CD4-positive, alpha-beta T cell (primary cell): ENCODE measurements at regions of chr1 and their contacts with region 1.

Region 1: GRCh38 chr1:155208541-155209311 is at the start of gene MTX1:
- DNase-seq: peak; percentile 73 to 95 (median 86)
- ATAC-seq: peak; percentile 80
- H3K4me3 ChIP-seq: peak within 1 kb of the TSS; percentile 69
- H3K4me3 Mint-ChIP-seq: peak within 1 kb of the TSS; percentile 94
- H3K27ac ChIP-seq: peak within 1 kb of the TSS; percentile 99 to 100
- H3K27ac Mint-ChIP-seq: peak within 1 kb of the TSS; percentile 96
- H3K4me1 ChIP-seq: peaks cover 30% of the 10 kb centered on the region
- H3K4me1 Mint-ChIP-seq: peaks cover 31% of the 10 kb centered on the region
- H3K27me3 ChIP-seq: no peaks in the 10 kb centered on the region
- H3K27me3 Mint-ChIP-seq: no peaks in the 10 kb centered on the region
- CTCF ChIP-seq: no peak
- total RNA-seq, gene MTX1: 19.9 to 20.7 TPM

Region 2: DNA sequence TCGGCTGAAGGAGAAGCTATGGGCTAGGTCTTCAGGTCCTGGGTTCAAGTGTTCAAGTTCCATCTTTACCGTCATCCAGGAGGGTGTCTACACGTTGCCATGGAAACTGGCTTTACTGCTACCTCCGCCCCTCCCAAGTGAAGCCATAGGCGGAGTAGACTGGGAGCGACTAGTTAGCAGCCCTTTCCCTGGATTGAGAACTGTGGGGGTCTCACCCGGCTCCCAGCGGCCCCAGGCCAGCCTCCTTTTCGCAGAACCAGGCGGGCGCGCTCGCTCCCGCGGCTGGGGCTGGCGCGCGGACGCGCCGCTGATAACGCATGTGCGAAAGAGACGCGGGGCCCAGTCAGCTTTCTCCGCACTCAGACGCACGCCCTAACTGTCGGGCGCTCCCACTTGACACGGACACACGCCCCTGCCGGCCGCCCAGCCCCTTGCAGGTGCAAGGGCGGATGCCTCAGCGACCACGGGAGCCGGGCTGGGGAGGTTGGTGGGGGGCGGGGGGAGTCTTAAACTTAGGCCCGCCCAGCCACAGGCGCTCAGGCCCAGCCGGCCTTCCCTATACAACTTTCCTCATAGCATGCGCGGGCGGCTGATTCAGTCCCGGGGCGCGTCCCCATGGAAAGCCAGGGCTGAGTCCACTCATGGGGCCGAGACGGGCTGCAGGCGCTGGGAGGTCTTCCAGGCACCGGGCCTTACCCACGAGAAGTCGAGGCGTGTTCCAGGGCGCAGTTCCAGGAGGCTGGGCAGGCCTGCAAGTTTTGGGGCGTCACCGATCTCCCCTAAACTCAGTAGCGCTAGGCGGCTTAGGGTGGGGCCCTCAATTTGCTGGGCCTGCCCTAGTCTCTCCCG is 137.8 kb before region 1 on chr1:
- CTCF ChIA-PET with region 1: no interaction called
- POLR2A ChIA-PET with region 1: no interaction called
- intact Hi-C with region 1: no loop called
- DNase-seq: peak; percentile 63 to 92 (median 78)
- ATAC-seq: peak; percentile 99
- H3K4me3 ChIP-seq: peak overlapping the region; percentile 49
- H3K4me3 Mint-ChIP-seq: peak overlapping the region; percentile 44
- H3K27ac ChIP-seq: no peak overlapping the region
- H3K27ac Mint-ChIP-seq: no peak overlapping the region
- H3K4me1 ChIP-seq: peaks cover 29% of the 10 kb centered on the region
- H3K4me1 Mint-ChIP-seq: peaks cover 30% of the 10 kb centered on the region
- H3K27me3 ChIP-seq: no peaks in the 10 kb centered on the region
- H3K27me3 Mint-ChIP-seq: no peaks in the 10 kb centered on the region
- CTCF ChIP-seq: peak; percentile 42

Region 3: DNA sequence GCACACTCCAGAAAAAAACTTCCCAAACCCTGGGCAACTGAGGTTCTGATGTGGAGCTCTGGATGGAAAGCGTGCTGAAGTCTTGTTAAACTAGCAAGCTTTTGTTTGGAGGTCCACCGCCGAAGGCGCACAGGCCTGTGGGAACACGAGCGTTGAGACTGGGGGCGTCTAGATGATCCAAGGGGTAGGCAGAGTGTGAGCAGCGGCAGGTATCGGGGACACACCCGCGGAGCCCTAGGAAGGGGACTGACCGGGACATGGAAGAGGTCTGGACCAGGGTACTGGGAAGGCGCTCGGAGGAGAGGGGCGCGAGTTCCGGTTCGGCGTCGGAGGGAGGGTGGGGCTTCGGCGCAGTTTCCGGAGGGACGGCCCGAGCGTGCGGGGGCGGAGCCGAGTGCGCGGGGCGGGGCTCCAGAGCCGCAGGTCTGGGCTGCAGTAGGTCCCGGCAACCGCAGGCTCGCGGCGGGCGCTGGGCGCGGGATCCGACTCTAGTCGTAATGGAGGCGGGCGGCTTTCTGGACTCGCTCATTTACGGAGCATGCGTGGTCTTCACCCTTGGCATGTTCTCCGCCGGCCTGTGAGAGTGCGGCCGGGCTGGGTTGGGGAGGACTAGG is 73.2 kb before region 1 on chr1 and contains the start of gene SLC50A1:
- CTCF ChIA-PET with region 1: interaction called, 3 read pairs
- POLR2A ChIA-PET with region 1: no interaction called
- intact Hi-C with region 1: loop called in 1 of 2 experiments (anchors 5 kb)
- DNase-seq: peak; percentile 83 to 97 (median 89)
- ATAC-seq: peak; percentile 85
- H3K4me3 ChIP-seq: peak within 1 kb of the TSS; percentile 97
- H3K4me3 Mint-ChIP-seq: peak within 1 kb of the TSS; percentile 95
- H3K27ac ChIP-seq: peak within 1 kb of the TSS; percentile 98 to 99
- H3K27ac Mint-ChIP-seq: peak within 1 kb of the TSS; percentile 98
- H3K4me1 ChIP-seq: peaks cover 47% of the 10 kb centered on the region
- H3K4me1 Mint-ChIP-seq: peaks cover 54% of the 10 kb centered on the region
- H3K27me3 ChIP-seq: no peaks in the 10 kb centered on the region
- H3K27me3 Mint-ChIP-seq: peaks cover 3% of the 10 kb centered on the region
- CTCF ChIP-seq: no peak
- total RNA-seq, gene SLC50A1: 10.2 to 12.5 TPM

Region 4: DNA sequence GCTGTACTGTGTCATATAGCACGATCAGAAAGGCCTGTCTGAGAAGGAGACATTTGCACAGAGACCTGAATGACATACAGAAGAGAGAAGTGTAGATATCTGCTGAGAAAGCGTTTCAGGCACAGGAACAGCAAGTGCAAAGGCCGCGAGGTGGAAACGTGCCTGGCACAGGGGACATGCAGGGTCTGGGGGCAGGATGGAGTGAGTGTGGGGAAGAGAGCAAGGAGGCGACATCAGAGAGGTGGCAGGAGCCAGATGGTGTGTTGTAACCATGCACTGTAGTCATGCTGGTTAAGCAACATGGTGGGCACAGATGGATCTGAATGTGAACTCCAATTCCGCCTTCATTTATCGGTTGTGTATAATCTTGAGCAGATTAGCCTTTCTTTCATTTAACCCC is 48.6 kb before region 1 on chr1:
- CTCF ChIA-PET with region 1: no interaction called
- POLR2A ChIA-PET with region 1: no interaction called
- intact Hi-C with region 1: no loop called
- DNase-seq: no peak
- ATAC-seq: no peak
- H3K4me3 ChIP-seq: no peak overlapping the region
- H3K4me3 Mint-ChIP-seq: no peak overlapping the region
- H3K27ac ChIP-seq: no peak overlapping the region
- H3K27ac Mint-ChIP-seq: no peak overlapping the region
- H3K4me1 ChIP-seq: no peaks in the 10 kb centered on the region
- H3K4me1 Mint-ChIP-seq: no peaks in the 10 kb centered on the region
- H3K27me3 ChIP-seq: no peaks in the 10 kb centered on the region
- H3K27me3 Mint-ChIP-seq: no peaks in the 10 kb centered on the region
- CTCF ChIP-seq: no peak

Region 5: DNA sequence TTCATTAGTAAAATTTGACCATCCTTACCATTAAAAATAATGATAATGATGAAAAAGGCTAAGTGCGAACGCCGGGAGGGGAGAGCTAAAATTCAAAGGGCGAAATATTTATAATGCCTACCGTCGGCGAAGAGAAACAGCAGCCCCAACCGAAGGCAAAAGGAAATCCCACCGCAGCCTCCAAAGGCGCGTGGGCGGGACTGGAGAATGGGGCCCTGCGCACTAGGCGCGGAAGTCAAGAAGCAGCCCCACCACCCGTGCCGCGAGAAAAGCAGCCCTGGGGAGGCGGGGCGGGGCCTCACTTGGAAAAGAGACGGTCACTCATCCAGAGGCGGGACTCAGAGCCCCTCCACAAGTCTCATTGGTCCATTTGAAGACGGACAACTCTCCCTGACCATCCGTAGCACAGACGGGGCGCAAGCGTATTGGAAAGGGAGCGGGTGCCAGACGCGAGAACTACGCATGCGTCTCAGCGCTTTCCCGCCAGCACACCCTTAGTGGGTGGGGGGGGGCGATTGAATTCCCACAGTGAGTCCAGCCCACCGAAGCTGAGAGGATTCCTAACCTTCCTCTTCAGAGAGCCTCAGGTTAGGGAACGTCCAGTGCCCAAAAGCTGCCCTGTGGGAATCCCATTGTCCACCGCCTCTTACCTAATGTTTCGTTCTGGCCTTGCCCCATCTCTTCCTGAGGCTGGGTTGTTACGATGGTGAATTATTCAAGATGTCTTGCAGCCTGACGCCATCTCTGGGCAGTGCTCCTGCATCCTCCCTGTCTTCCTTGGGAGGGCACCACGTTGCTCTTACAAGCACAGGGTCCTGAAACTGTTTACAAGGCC is 18.8 kb after region 1 on chr1:
- CTCF ChIA-PET with region 1: interaction called, 12 read pairs
- POLR2A ChIA-PET with region 1: interaction called, 42 read pairs
- intact Hi-C with region 1: loop called (anchors 1 kb)
- DNase-seq: peak; percentile 96 to 100 (median 98)
- ATAC-seq: peak; percentile 93
- H3K4me3 ChIP-seq: peak overlapping the region; percentile 75
- H3K4me3 Mint-ChIP-seq: peak overlapping the region; percentile 72
- H3K27ac ChIP-seq: peak overlapping the region; percentile 82 to 87
- H3K27ac Mint-ChIP-seq: peak overlapping the region; percentile 74
- H3K4me1 ChIP-seq: peaks cover 25% of the 10 kb centered on the region
- H3K4me1 Mint-ChIP-seq: peaks cover 26% of the 10 kb centered on the region
- H3K27me3 ChIP-seq: no peaks in the 10 kb centered on the region
- H3K27me3 Mint-ChIP-seq: no peaks in the 10 kb centered on the region
- CTCF ChIP-seq: no peak

Region 6: GRCh38 chr1:155261852-155262673 is 53.3 kb after region 1 on chr1 and contains the start of gene SCAMP3:
- CTCF ChIA-PET with region 1: no interaction called
- POLR2A ChIA-PET with region 1: interaction called, 13 read pairs
- intact Hi-C with region 1: no loop called
- DNase-seq: peak; percentile 62 to 95 (median 79)
- ATAC-seq: peak; percentile 93
- H3K4me3 ChIP-seq: peak within 1 kb of the TSS; percentile 100
- H3K4me3 Mint-ChIP-seq: peak within 1 kb of the TSS; percentile 95
- H3K27ac ChIP-seq: peak within 1 kb of the TSS; percentile 71 to 72
- H3K27ac Mint-ChIP-seq: peak within 1 kb of the TSS; percentile 82
- H3K4me1 ChIP-seq: peaks cover 28% of the 10 kb centered on the region
- H3K4me1 Mint-ChIP-seq: peaks cover 40% of the 10 kb centered on the region
- H3K27me3 ChIP-seq: no peaks in the 10 kb centered on the region
- H3K27me3 Mint-ChIP-seq: no peaks in the 10 kb centered on the region
- CTCF ChIP-seq: no peak
- total RNA-seq, gene SCAMP3: 54.8 to 55.6 TPM

Region 7: DNA sequence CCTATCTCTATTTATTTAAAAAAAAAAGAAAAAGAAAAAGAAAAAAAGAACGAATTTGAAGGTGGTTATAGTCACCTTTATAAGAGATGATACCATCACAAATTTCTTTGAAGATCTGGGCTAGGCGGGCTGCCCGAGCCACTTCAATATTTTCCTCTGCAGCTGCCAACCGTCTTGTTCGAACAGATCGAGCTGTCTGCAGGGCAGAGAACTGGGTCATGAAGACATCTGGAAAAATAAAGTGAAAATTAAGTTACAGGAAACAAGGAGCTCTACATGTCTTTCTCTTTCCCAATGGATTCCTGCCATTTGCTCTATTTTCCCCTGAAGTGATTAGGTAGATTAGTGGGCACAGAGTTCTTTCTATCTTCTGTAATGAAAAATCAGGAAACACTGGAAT is 143.9 kb after region 1 on chr1:
- CTCF ChIA-PET with region 1: no interaction called
- POLR2A ChIA-PET with region 1: no interaction called
- intact Hi-C with region 1: no loop called
- DNase-seq: no peak
- ATAC-seq: no peak
- H3K4me3 ChIP-seq: no peak overlapping the region
- H3K4me3 Mint-ChIP-seq: no peak overlapping the region
- H3K27ac ChIP-seq: no peak overlapping the region
- H3K27ac Mint-ChIP-seq: no peak overlapping the region
- H3K4me1 ChIP-seq: no peaks in the 10 kb centered on the region
- H3K4me1 Mint-ChIP-seq: no peaks in the 10 kb centered on the region
- H3K27me3 ChIP-seq: no peaks in the 10 kb centered on the region
- H3K27me3 Mint-ChIP-seq: no peaks in the 10 kb centered on the region
- CTCF ChIP-seq: no peak

Region 8: DNA sequence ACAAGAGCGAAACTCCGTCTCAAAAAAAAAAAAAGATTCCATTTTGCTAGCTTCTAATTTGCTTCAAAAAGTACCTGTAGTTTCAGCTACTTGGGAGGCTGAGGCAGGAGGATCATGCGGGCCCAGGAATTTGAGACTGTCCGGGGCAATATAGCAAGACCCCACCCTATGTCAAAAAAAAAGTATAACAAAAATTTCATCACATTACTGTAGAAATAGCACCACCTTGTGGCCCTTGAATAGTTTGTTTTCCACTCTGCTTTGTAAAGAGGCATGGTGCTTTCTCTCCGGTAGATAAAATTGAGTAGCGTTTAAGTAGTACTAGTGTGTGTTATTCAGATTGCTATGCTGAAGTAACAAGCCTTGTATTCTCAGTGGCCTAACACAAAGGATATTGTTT is 383.0 kb after region 1 on chr1:
- CTCF ChIA-PET with region 1: no interaction called
- POLR2A ChIA-PET with region 1: no interaction called
- intact Hi-C with region 1: loop called in 1 of 2 experiments (anchors 1 kb)
- DNase-seq: peak in 6 of 14 experiments; percentile 7 to 78 (median 64)
- ATAC-seq: peak; percentile 72
- H3K4me3 ChIP-seq: no peak overlapping the region
- H3K4me3 Mint-ChIP-seq: no peak overlapping the region
- H3K27ac ChIP-seq: no peak overlapping the region
- H3K27ac Mint-ChIP-seq: no peak overlapping the region
- H3K4me1 ChIP-seq: no peaks in the 10 kb centered on the region
- H3K4me1 Mint-ChIP-seq: peaks cover 5% of the 10 kb centered on the region
- H3K27me3 ChIP-seq: no peaks in the 10 kb centered on the region
- H3K27me3 Mint-ChIP-seq: no peaks in the 10 kb centered on the region
- CTCF ChIP-seq: peak; percentile 63